ENCODE measurements at regions of chr16 and their contacts with region 1.

Region 1: DNA sequence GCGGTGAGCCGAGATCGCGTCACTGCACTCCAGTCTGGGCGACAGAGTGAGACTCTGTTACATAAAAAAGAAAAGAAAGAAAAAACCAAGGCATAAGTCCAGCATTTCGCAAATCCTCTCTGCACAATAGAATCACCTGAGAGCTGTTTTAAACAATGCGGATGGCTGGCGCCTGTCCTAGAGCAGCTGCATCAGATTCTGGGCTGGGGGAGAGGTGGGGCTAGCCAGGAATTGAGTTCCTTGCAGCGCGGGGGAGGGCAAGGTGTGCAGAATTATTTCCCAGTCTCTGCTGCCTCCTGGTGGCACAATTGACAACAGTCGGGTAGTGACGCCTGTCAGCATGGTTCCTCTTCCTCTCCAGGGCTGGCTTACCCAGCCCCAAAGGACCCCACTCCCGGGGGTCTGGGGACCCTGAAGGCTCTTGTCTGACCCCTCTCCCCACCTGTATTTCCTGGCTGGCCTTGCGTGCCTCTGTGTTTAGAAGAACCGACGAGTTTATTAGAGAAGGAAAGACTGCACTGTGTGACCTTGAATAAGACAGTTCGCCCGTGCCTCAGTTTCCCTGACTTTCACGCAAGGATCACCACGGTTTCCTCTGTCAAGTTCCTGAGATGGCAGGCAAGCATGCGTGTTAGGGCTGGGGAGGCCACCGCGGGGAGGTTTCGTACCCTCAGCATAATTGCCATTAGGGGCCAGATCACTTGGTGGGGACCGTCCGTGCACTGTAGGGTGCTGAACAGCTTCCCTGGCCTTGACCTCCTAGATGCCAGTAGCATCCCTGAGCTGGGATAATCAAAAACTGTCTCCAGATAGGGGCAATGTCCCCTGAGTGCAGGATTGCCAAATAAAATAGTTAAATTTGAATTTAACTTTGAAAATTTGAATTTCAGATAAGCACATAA is 41.0 kb upstream of the PLCG2 start:
- DNase-seq: peak; percentile 68 to 83 (median 79)
- H3K4me3 ChIP-seq: peak overlapping the region; percentile 25 to 76 (median 30)
- H3K4me3 Mint-ChIP-seq: peak overlapping the region; percentile 72 to 88
- H3K27ac ChIP-seq: peak overlapping the region; percentile 50 to 72
- H3K27ac Mint-ChIP-seq: peak overlapping the region; percentile 78 to 91 (median 88)
- H3K4me1 ChIP-seq: peaks cover 35 to 38% of the 10 kb centered on the region in 2 donors
- H3K4me1 Mint-ChIP-seq: peaks cover 40% of the 10 kb centered on the region
- H3K27me3 ChIP-seq: no peaks in the 10 kb centered on the region
- H3K27me3 Mint-ChIP-seq: peaks cover 0 to 3% (median 1%) of the 10 kb centered on the region in 3 donors
- CTCF ChIP-seq: peak; percentile 94

Region 2: GRCh38 chr16:81095953-81096717 is 642.0 kb before region 1 on chr16 and contains the start of gene GCSH:
- intact Hi-C with region 1: loop called in 1 of 2 experiments (anchors 10 kb)
- DNase-seq: peak; percentile 97 to 98 (median 98)
- H3K4me3 ChIP-seq: peak within 1 kb of the TSS; percentile 35 to 89 (median 44)
- H3K4me3 Mint-ChIP-seq: peak within 1 kb of the TSS; percentile 76 to 89
- H3K27ac ChIP-seq: peak within 1 kb of the TSS in 1 of 2 donors; percentile 25
- H3K27ac Mint-ChIP-seq: peak within 1 kb of the TSS in 3 of 7 donors; percentile 33 to 78 (median 55)
- H3K4me1 ChIP-seq: peaks cover 9 to 16% of the 10 kb centered on the region in 2 donors
- H3K4me1 Mint-ChIP-seq: peaks cover 15% of the 10 kb centered on the region
- H3K27me3 ChIP-seq: peaks cover 0 to 7% of the 10 kb centered on the region in 2 donors
- H3K27me3 Mint-ChIP-seq: peaks cover 15 to 17% (median 16%) of the 10 kb centered on the region in 3 donors
- CTCF ChIP-seq: no peak
- polyA plus RNA-seq, gene GCSH: 0.77 to 2.0 (median 1.0) TPM

Region 3: DNA sequence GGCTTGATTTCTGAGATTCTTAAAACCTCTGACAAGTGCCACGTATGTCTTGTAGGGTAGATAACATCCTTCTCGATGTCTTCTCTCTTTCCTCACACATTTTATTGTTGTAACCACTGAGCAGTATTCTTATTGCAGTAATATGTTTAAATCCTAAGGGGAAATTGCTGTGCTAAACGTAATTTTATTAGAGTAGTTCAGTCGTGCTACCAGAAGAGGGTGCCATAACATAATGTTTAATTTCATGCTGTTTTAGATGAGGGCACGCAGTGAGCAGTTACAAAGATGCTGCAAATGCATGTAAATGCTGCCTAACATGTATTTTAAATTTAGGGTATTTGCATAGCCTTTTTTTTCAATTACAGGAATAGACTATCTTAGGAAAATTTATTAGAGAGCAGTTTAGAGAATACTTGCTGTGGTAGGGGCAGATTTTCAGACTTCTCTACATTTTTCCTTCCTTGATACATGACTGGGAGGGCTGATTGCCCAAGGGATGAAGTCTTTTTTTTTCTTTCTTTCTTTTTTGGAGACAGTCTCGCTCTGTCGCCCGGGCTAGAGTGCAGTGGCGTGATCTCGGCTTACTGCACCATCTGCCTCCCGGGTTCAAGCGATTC is 371.7 kb before region 1 on chr16:
- intact Hi-C with region 1: loop called (anchors 5 kb)
- DNase-seq: peak; percentile 28 to 54 (median 38)
- H3K4me3 ChIP-seq: no peak overlapping the region
- H3K4me3 Mint-ChIP-seq: no peak overlapping the region
- H3K27ac ChIP-seq: no peak overlapping the region
- H3K27ac Mint-ChIP-seq: peak overlapping the region in 1 of 7 donors; percentile 7
- H3K4me1 ChIP-seq: no peaks in the 10 kb centered on the region
- H3K4me1 Mint-ChIP-seq: no peaks in the 10 kb centered on the region
- H3K27me3 ChIP-seq: no peaks in the 10 kb centered on the region
- H3K27me3 Mint-ChIP-seq: no peaks in the 10 kb centered on the region
- CTCF ChIP-seq: peak; percentile 82

Region 4: DNA sequence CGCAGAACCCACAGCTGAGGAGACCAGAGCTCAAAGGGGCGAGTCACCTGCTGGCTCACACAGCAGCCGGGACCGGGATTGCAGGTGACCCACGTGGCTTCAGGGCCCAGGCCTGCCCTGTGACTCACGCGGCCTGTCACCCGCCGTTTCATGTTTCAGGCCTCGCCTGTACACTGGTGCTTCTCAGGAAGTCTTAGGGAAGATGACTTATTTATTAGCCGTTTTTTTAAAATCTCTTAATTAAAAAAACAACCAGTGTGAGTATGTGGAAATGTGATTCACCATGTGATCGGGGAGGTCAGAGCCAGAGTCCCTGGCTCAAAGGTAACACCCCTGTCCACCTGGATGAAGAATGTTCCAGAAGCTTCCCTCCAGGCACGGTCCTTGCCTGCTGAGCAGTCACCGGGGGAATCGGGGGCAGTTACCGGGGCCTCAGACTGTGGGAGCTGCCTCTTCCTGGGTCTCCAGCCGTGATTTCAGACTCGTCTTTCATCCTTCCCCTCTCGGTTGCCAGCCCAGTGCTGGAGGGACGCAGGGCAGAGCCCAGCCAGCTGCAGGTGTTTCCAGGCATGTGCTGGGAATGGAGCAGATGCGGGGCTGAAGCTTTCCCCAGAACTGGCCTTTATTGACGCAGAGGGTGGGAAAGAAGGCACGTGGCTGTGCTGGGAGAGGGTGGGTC is 244.2 kb before region 1 on chr16:
- intact Hi-C with region 1: no loop called
- DNase-seq: peak; percentile 68 to 88 (median 70)
- H3K4me3 ChIP-seq: no peak overlapping the region
- H3K4me3 Mint-ChIP-seq: no peak overlapping the region
- H3K27ac ChIP-seq: peak overlapping the region; percentile 15 to 46
- H3K27ac Mint-ChIP-seq: peak overlapping the region; percentile 58 to 86 (median 82)
- H3K4me1 ChIP-seq: peaks cover 85 to 100% of the 10 kb centered on the region in 2 donors
- H3K4me1 Mint-ChIP-seq: peaks cover 94% of the 10 kb centered on the region
- H3K27me3 ChIP-seq: no peaks in the 10 kb centered on the region
- H3K27me3 Mint-ChIP-seq: peaks cover 0 to 1% (median under 1%) of the 10 kb centered on the region in 3 donors
- CTCF ChIP-seq: no peak

Region 5: GRCh38 chr16:81755915-81756614 is 17.9 kb after region 1 on chr16:
- intact Hi-C with region 1: loop called in 1 of 2 experiments (anchors 2 kb)
- DNase-seq: peak; percentile 23 to 48 (median 27)
- H3K4me3 ChIP-seq: peak overlapping the region in 1 of 3 experiments; percentile 13
- H3K4me3 Mint-ChIP-seq: peak overlapping the region; percentile 9 to 63
- H3K27ac ChIP-seq: no peak overlapping the region
- H3K27ac Mint-ChIP-seq: peak overlapping the region in 4 of 7 donors; percentile 42 to 78 (median 57)
- H3K4me1 ChIP-seq: peaks cover 57 to 67% of the 10 kb centered on the region in 2 donors
- H3K4me1 Mint-ChIP-seq: peaks cover 62% of the 10 kb centered on the region
- H3K27me3 ChIP-seq: no peaks in the 10 kb centered on the region
- H3K27me3 Mint-ChIP-seq: peaks cover 1 to 7% (median 6%) of the 10 kb centered on the region in 3 donors
- CTCF ChIP-seq: peak; percentile 37

Region 6: GRCh38 chr16:81967358-81967757 is 229.2 kb after region 1 on chr16:
- intact Hi-C with region 1: no loop called
- DNase-seq: peak; percentile 11 to 28 (median 25)
- H3K4me3 ChIP-seq: no peak overlapping the region
- H3K4me3 Mint-ChIP-seq: no peak overlapping the region
- H3K27ac ChIP-seq: no peak overlapping the region
- H3K27ac Mint-ChIP-seq: no peak overlapping the region
- H3K4me1 ChIP-seq: no peaks in the 10 kb centered on the region
- H3K4me1 Mint-ChIP-seq: peaks cover 4% of the 10 kb centered on the region
- H3K27me3 ChIP-seq: no peaks in the 10 kb centered on the region
- H3K27me3 Mint-ChIP-seq: peaks cover 2 to 6% (median 3%) of the 10 kb centered on the region in 3 donors
- CTCF ChIP-seq: no peak

Measured in CD14-positive monocyte (primary cell).